ENCODE measurements at regions of chr6 and their contacts with region 1.

Region 1: DNA sequence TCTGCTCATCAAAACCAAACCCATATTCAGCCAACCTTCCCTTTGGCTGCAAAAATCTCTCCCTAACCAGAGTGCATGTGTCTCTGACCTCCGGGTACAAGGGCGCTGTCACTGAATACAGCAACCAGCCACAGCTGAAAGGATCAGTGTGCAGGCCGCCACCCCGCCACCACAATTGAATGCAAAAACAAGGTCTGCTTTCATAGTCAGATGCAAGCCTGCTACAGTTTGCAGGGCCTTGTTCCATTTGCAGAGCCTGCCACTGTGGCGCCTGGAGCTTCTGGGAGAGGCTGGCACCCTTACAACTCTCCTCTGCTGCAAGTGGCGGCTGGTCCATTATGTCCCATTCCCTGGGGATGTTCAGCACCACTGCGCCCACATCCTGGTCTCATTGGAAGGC is 23.5 kb downstream of the MDGA1 start:
- DNase-seq: peak; percentile 50

Region 2: DNA sequence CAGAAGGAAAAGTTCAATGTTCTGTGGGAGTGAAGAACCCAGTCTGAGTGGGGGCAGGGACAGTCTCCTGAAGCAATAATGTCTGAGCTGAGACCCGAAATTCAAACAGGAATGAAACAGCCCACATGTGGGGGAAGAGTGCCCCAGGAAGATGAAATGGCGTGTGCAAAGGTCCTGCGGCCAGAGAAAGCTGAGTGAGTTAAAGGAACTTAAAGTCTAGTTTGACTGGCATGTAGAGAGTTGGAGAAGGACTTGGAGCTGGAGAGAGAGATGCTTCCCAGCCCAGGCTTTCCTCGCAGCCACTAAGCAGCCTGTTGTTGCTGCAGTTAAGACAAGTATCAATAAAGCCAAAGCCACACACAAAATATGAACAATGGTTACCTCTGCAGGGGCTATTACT is 61.6 kb after region 1 on chr6:
- intact Hi-C with region 1: loop called in 1 of 2 experiments (anchors 2 kb)
- DNase-seq: no peak

Region 3: DNA sequence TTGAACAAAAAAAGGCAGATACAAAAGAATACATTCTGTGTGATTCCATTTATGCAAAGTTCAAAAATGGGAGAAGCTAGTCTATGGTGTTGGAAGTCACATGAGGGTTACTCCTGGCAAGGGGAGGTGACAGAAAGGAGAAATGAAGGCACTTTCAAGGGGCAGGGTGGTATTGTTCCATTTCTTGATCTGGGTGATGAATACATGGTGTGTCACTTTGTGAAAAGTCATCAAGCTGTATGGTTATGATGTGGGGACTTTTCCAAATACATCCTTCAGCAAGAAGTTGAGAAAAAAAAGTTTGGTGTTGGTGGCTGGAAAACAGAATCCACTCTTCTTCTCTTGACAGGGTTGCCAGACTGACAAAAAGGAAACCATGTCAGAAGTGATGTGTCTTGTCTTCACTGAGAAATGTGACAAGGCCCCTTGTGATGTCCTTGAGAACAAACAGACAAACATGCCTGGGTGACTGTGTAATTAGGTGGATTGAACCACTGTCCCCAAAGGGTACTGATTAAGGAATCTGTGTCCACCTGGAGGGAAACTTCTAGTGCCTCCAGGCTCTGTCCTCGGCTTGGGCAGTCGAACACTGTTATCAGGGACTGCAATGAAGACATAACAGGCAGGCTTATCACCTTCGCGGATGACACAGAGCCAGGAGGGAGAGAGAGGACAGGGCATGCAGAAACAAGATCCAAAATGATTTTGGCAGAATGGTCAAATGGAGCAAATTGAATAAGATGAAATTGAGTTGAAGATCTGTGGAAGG is 84.3 kb after region 1 on chr6:
- intact Hi-C with region 1: no loop called
- DNase-seq: no peak